ENCODE measurements at regions of chr5 and their contacts with region 1.

Region 1: GRCh38 chr5:81751009-81751835 is at the start of gene SSBP2:
- DNase-seq: peak; percentile 99
- H3K4me3 Mint-ChIP-seq: peak within 1 kb of the TSS; percentile 87
- H3K27ac Mint-ChIP-seq: peak within 1 kb of the TSS; percentile 87
- H3K4me1 Mint-ChIP-seq: peaks cover 22% of the 10 kb centered on the region
- H3K27me3 Mint-ChIP-seq: peaks cover 24% of the 10 kb centered on the region
- total RNA-seq, gene SSBP2: 28.1 to 30.3 TPM

Region 2: GRCh38 chr5:81631124-81631523 is 120.1 kb before region 1 on chr5:
- CTCF ChIA-PET with region 1: interaction called, 3 read pairs
- POLR2A ChIA-PET with region 1: interaction called, 10 read pairs
- DNase-seq: peak; percentile 70
- H3K4me3 Mint-ChIP-seq: peak overlapping the region; percentile 28
- H3K27ac Mint-ChIP-seq: no peak overlapping the region
- H3K4me1 Mint-ChIP-seq: peaks cover 8% of the 10 kb centered on the region
- H3K27me3 Mint-ChIP-seq: no peaks in the 10 kb centered on the region

Region 3: DNA sequence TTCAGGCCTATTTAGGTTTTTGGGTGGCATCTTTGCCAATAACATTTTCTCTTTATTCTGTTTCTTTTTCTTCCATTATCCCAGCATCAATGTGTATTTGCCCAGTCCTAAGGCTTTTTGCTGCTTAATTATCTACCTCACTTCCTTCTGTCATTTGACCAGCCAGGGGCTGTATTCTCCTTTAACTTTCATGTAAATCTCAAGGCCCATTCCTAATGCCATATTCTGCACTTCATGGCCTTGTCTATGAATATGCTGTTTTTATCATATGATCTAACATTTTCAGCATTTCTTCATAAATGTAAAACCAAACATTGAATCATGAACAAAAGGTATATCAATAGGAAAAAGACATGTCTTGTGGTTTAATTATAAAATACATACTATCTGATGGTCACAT is 109.0 kb before region 1 on chr5:
- CTCF ChIA-PET with region 1: no interaction called
- POLR2A ChIA-PET with region 1: no interaction called
- DNase-seq: no peak
- H3K4me3 Mint-ChIP-seq: no peak overlapping the region
- H3K27ac Mint-ChIP-seq: no peak overlapping the region
- H3K4me1 Mint-ChIP-seq: no peaks in the 10 kb centered on the region
- H3K27me3 Mint-ChIP-seq: no peaks in the 10 kb centered on the region

Region 4: DNA sequence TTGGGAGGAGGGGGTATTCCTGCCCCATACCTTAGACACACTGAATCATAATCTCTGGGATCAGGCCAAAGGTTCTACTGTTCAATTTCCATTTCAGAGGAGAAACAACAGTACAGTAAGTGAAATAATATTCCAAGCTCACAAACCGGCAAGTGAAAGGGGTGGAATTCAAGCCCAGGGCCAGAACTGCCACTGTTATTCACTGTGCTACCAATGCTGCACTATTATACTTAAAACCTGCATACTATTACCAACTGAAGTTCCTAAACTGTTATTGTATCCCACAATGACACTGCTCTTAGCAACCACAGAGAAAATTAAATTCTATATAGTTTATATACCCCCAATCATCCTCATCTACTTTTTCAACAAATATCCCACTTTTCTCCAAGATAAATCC is 24.9 kb before region 1 on chr5:
- CTCF ChIA-PET with region 1: no interaction called
- POLR2A ChIA-PET with region 1: no interaction called
- DNase-seq: no peak
- H3K4me3 Mint-ChIP-seq: no peak overlapping the region
- H3K27ac Mint-ChIP-seq: no peak overlapping the region
- H3K4me1 Mint-ChIP-seq: peaks cover 4% of the 10 kb centered on the region
- H3K27me3 Mint-ChIP-seq: no peaks in the 10 kb centered on the region

Region 5: GRCh38 chr5:81779125-81779915 is 28.1 kb after region 1 on chr5:
- CTCF ChIA-PET with region 1: interaction called, 5 read pairs
- POLR2A ChIA-PET with region 1: interaction called, 47 read pairs
- DNase-seq: peak; percentile 53
- H3K4me3 Mint-ChIP-seq: peak overlapping the region; percentile 75
- H3K27ac Mint-ChIP-seq: peak overlapping the region; percentile 60
- H3K4me1 Mint-ChIP-seq: peaks cover 19% of the 10 kb centered on the region
- H3K27me3 Mint-ChIP-seq: no peaks in the 10 kb centered on the region

Region 6: DNA sequence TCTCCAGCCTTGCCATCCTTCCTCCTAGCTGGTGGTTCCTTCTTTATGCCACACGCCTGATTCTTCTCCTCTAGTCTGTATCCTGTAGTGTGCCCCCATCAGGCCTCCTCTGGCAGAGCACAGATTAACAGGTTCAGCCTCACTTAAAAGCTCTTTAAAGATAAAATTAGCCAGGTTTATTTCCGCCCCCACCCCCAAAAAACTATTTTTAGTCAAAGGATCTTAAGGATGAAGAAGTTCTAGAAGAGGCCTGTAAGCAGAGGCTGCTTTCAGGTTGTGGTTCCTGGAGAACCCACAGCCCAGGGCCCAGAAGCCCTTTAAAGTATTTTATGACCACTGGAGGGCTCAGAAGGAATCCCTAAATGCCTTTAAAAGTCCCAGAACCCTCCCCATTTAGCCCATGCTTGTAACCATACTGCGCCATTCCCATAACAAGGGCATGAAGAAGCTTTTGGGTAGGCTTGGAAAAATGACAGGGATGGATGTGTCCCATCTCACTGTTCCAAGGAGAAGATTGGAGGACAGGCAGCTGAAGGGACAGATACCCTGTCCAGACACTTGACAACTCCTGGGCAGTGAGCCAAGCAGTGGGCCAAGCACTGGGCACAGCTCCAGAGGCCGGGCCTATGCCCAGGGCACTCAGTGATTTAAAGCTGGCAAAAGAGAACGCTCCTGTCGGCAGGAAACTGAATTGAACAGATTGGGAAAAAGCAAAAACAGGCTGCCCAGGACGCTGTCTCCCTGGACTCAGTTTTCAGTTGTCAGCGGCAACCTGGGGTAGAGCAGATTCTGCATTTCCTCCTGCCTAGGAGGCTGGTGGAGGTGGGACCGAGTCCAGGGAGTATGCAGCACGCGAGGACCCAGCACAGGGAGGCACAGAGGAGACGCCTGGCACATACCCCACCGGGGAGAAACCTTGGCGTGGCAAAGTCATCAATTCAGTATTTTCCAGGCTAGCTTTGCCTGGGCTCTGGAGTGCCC is 106.0 kb after region 1 on chr5:
- CTCF ChIA-PET with region 1: interaction called, 54 read pairs
- POLR2A ChIA-PET with region 1: interaction called, 280 read pairs
- DNase-seq: peak; percentile 19
- H3K4me3 Mint-ChIP-seq: no peak overlapping the region
- H3K27ac Mint-ChIP-seq: no peak overlapping the region
- H3K4me1 Mint-ChIP-seq: peaks cover 23% of the 10 kb centered on the region
- H3K27me3 Mint-ChIP-seq: no peaks in the 10 kb centered on the region

Region 7: GRCh38 chr5:82278095-82278918 is 527.1 kb after region 1 on chr5 and contains the start of gene RPS23:
- CTCF ChIA-PET with region 1: no interaction called
- POLR2A ChIA-PET with region 1: interaction called, 19 read pairs
- DNase-seq: peak; percentile 90
- H3K4me3 Mint-ChIP-seq: peak within 1 kb of the TSS; percentile 82
- H3K27ac Mint-ChIP-seq: peak within 1 kb of the TSS; percentile 88
- H3K4me1 Mint-ChIP-seq: peaks cover 60% of the 10 kb centered on the region
- H3K27me3 Mint-ChIP-seq: no peaks in the 10 kb centered on the region
- total RNA-seq, gene RPS23: 1,639 to 1,645 TPM

Measured in activated CD4-positive, alpha-beta memory T cell treated with anti-CD3 and anti-CD28 coated beads, Interleukin-2, amount 10 ng/mL, durations not matched to agents 7 days and 5 days (primary cell).